Posterior vena cava (tissue), 2 donors: ENCODE measurements at regions of chr4 and their contacts with region 1.

Region 1: GRCh38 chr4:17241835-17242234 is 270.1 kb downstream of the QDPR start:
- DNase-seq: no peak

Region 2: DNA sequence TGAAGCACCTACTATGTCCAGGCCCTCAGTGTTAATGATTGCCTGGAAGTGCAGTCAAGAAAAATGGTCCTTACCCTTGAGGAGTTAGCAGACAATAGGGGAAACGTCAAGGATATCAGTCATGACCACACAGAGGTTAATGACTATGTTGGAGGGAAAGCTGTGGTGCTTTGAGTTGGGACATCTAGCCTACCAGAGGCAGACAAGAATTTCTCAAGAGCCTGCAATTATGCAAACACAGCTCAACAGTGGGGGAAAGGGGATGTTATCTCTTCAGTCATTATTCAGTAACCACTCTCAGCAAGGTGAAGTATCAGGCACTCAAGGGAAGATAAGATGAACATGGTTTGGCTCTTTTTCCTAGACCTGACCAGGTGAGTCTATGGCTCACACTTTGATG is 1296.3 kb before region 1 on chr4:
- intact Hi-C with region 1: no loop called
- DNase-seq: no peak

Region 3: GRCh38 chr4:17195461-17196275 is 46.2 kb before region 1 on chr4:
- intact Hi-C with region 1: no loop called
- DNase-seq: no peak

Region 4: GRCh38 chr4:17286752-17287460 is 45.1 kb after region 1 on chr4:
- intact Hi-C with region 1: loop called in 1 of 2 experiments (anchors 2 kb)
- DNase-seq: no peak